CD4-positive, alpha-beta T cell (primary cell): ENCODE measurements at regions of chr11 and their contacts with region 1.

Region 1: DNA sequence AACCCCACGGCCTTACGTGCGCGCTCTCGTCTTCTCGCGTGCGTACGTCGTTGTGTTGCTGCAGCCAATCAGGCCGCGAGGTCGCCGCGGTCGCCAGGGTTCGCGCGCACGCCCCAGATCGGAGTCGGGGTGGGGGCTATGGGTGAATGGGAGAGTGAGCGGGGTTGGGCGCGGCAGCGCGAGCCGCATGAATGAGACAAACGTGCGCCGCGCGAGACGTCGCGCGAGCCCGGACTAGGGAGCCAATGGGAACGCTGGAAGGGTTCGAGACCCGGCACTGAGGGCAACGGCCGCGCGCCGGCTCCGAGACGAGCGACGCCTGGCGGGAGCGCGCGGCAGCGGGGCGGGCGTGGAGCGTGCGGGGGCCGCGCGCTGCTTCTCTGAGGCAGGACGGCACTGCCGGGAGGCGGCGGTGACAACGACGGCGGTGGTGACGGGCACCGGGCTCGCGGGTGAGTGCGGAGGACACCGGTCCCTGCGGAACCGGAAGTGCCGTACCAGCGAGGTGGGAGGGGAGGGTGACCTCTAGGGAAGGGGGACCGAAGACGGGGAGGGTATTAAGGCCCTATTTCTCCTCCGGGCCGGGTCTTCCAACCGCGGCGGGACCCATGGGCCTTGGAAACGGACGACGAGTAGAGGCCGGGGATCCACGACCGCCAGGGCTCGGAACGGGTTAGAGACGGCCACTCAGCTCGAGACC is at the start of gene ZDHHC5:
- DNase-seq: peak; percentile 98 to 100 (median 100)
- ATAC-seq: peak; percentile 83
- H3K4me3 ChIP-seq: peak within 1 kb of the TSS; percentile 87
- H3K4me3 Mint-ChIP-seq: peak within 1 kb of the TSS; percentile 89
- H3K27ac ChIP-seq: peak within 1 kb of the TSS; percentile 98
- H3K27ac Mint-ChIP-seq: peak within 1 kb of the TSS; percentile 95
- H3K4me1 ChIP-seq: peaks cover 32% of the 10 kb centered on the region
- H3K4me1 Mint-ChIP-seq: peaks cover 55% of the 10 kb centered on the region
- H3K27me3 ChIP-seq: no peaks in the 10 kb centered on the region
- H3K27me3 Mint-ChIP-seq: no peaks in the 10 kb centered on the region
- CTCF ChIP-seq: peak; percentile 52
- total RNA-seq, gene ZDHHC5: 59.7 to 61.1 TPM

Region 2: DNA sequence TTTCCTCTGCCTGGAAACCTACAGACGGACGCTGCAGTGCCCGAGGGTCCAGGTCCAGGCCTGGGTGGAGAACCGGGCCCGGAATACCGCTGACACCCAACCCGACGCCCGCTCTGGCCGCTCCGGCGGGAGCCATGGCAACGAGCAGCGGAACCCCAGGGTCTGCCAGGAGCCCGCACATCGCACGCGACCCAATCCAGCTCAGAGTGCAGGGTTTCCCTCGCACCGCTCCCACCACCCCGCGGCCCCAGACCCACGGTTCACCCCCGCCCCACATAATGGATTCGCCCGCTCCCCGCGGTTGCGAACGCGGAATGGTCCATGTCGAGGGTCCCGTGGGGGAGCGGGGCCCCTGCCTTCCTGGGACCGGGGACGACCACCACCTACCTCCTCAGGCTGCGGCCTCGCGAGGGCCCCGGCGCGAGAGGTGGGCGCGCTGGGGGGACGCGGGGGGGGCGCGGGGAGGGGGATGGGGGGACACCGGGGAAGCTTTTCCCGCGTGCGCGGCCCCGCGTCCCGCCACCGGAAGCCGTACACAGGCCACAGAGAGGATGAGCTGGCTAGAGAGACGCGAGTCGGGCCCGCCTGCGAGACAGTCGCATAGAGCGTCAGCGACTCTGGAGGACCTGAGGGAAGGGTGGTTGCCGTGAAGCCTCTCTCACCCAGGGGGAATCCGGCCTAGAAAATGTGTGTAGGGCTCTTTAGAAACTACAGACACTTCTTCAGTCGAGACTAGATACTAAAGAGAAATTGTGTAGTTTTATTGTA is 332.4 kb before region 1 on chr11 and contains the start of gene SSRP1:
- CTCF ChIA-PET with region 1: no interaction called
- POLR2A ChIA-PET with region 1: interaction called, 4 read pairs
- intact Hi-C with region 1: loop called in 1 of 2 experiments (anchors 5 kb)
- DNase-seq: peak; percentile 77 to 95 (median 86)
- ATAC-seq: peak; percentile 97
- H3K4me3 ChIP-seq: peak within 1 kb of the TSS; percentile 80
- H3K4me3 Mint-ChIP-seq: peak within 1 kb of the TSS; percentile 89
- H3K27ac ChIP-seq: peak within 1 kb of the TSS; percentile 72 to 85
- H3K27ac Mint-ChIP-seq: peak within 1 kb of the TSS; percentile 96
- H3K4me1 ChIP-seq: peaks cover 29% of the 10 kb centered on the region
- H3K4me1 Mint-ChIP-seq: peaks cover 33% of the 10 kb centered on the region
- H3K27me3 ChIP-seq: no peaks in the 10 kb centered on the region
- H3K27me3 Mint-ChIP-seq: no peaks in the 10 kb centered on the region
- CTCF ChIP-seq: no peak
- total RNA-seq, gene SSRP1: 36.7 to 41.2 TPM

Region 3: DNA sequence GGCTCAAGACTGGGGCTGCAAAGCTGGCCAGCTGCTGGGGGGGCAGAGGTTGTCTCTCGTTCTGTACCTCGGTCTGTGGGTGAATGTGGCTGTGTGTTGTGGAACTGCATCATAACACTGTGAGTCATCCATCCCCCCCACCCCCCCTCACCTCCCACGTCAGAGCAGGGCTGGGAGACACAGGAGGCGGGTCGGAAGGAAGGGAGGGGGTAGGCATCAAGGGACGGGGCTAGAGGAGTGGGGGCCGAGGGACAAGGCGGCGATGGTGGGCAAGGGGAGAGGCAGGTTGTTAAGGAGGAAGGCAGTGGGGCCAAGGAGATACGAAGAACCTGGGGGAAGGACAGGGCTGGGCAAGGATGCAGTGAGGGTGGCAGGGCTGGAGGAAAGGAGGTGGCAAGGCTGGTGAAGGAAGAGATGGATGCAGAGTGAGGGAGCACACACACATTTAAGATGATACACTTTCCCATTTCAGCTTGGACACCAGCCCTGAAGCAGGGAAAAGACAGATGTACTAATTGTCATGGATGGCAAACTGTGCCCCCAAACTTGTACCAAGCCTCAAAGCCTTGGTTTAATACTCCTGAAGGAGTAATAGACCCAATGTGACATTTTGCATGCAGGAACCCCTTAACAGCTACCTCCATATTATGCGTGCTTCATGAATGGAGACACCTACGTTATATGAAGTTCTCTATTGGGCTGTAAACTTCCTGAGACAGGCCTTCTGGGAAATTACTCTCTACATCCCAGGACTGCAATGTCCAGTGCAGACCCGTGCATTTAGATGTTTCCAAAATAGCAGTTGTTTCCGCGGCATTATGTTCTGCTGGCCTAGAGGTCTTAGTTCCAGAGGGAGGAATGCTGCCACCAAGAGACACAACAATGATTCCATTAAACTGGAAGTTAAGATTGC is 17.8 kb before region 1 on chr11 and contains the start of gene YPEL4:
- CTCF ChIA-PET with region 1: no interaction called
- POLR2A ChIA-PET with region 1: interaction called, 4 read pairs
- intact Hi-C with region 1: loop called in 1 of 2 experiments (anchors 2 kb)
- DNase-seq: peak; percentile 51 to 92 (median 68)
- ATAC-seq: peak; percentile 83
- H3K4me3 ChIP-seq: peak within 1 kb of the TSS; percentile 53
- H3K4me3 Mint-ChIP-seq: peak within 1 kb of the TSS; percentile 87
- H3K27ac ChIP-seq: no peak within 1 kb of the TSS
- H3K27ac Mint-ChIP-seq: peak within 1 kb of the TSS; percentile 83
- H3K4me1 ChIP-seq: peaks cover 44% of the 10 kb centered on the region
- H3K4me1 Mint-ChIP-seq: peaks cover 49% of the 10 kb centered on the region
- H3K27me3 ChIP-seq: peaks cover 42 to 44% of the 10 kb centered on the region in 2 experiments
- H3K27me3 Mint-ChIP-seq: peaks cover 55% of the 10 kb centered on the region
- CTCF ChIP-seq: no peak
- total RNA-seq, gene YPEL4: 5.6 to 7.3 TPM

Region 4: DNA sequence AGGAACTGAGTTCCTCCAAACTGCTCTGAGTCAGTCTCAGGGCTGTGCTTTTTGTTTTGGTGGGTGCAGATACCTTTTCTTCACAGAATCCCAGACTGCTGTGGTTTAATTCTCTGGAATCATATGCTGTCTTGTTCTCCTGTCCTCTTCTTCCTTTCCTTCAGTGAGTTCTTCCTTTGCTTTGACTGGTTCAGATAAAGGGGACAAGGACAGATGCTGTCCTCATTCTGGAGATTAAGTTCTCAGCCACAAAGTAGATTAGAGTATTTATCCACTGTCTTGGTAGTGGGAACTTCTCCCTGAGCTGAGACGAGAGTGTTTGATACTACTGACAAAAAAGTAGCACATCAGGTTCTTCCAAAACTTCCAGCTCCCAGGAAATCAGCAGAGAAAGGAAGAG is 13.3 kb after region 1 on chr11:
- CTCF ChIA-PET with region 1: no interaction called
- POLR2A ChIA-PET with region 1: no interaction called
- intact Hi-C with region 1: no loop called
- DNase-seq: no peak
- ATAC-seq: no peak
- H3K4me3 ChIP-seq: no peak overlapping the region
- H3K4me3 Mint-ChIP-seq: no peak overlapping the region
- H3K27ac ChIP-seq: peak overlapping the region in 1 of 2 donors; percentile 18
- H3K27ac Mint-ChIP-seq: peak overlapping the region; percentile 70
- H3K4me1 ChIP-seq: peaks cover 25% of the 10 kb centered on the region
- H3K4me1 Mint-ChIP-seq: peaks cover 47% of the 10 kb centered on the region
- H3K27me3 ChIP-seq: no peaks in the 10 kb centered on the region
- H3K27me3 Mint-ChIP-seq: no peaks in the 10 kb centered on the region
- CTCF ChIP-seq: no peak

Region 5: DNA sequence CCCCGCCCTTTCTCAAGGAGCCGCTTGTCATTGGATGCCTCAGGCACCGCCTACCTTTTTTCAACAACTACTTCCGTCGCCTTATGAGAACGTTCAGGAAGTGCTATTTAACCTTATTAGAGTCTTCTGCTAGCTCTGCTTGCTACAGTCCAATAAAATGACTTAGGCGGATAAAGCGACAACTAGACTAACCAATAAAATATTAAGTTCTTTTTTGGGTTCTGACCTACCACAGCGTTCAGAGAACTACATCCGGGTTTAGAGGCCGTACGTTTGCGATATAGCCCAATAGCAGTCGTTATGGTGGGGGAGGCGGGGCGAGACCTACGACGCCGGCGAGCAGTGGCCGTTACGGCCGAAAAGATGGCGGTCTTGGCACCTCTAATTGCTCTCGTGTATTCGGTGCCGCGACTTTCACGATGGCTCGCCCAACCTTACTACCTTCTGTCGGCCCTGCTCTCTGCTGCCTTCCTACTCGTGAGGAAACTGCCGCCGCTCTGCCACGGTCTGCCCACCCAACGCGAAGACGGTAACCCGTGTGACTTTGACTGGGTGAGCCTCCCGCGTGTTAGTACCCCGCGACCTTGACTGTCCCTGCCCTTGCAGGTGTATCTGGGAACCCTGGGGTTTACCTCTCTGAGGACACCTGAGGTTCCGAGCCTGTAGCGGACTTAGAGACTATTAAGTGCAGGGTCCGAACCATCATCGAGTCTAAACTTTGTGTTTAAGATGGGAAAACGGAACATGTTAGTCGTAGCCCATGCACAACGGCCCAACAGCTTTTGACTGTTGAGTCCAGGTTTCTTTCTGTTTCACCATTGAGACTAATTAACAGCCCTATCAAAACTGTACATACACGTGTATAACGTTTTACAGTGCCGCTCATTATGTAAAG is 44.6 kb after region 1 on chr11 and contains the start of gene TMX2:
- CTCF ChIA-PET with region 1: no interaction called
- POLR2A ChIA-PET with region 1: interaction called, 15 read pairs
- intact Hi-C with region 1: loop called (anchors 1 to 2 kb)
- DNase-seq: peak; percentile 79 to 97 (median 84)
- ATAC-seq: peak; percentile 89
- H3K4me3 ChIP-seq: peak within 1 kb of the TSS; percentile 95
- H3K4me3 Mint-ChIP-seq: peak within 1 kb of the TSS; percentile 96
- H3K27ac ChIP-seq: peak within 1 kb of the TSS; percentile 85 to 95
- H3K27ac Mint-ChIP-seq: peak within 1 kb of the TSS; percentile 88
- H3K4me1 ChIP-seq: peaks cover 30% of the 10 kb centered on the region
- H3K4me1 Mint-ChIP-seq: peaks cover 53% of the 10 kb centered on the region
- H3K27me3 ChIP-seq: no peaks in the 10 kb centered on the region
- H3K27me3 Mint-ChIP-seq: no peaks in the 10 kb centered on the region
- CTCF ChIP-seq: no peak
- total RNA-seq, gene TMX2: 30.0 to 30.5 TPM

Region 6: GRCh38 chr11:57792060-57792541 is 124.2 kb after region 1 on chr11:
- CTCF ChIA-PET with region 1: no interaction called
- POLR2A ChIA-PET with region 1: no interaction called
- intact Hi-C with region 1: loop called (anchors 1 to 5 kb)
- DNase-seq: peak; percentile 76 to 97 (median 84)
- ATAC-seq: peak; percentile 94
- H3K4me3 ChIP-seq: peak overlapping the region; percentile 21
- H3K4me3 Mint-ChIP-seq: peak overlapping the region; percentile 80
- H3K27ac ChIP-seq: peak overlapping the region; percentile 79 to 83
- H3K27ac Mint-ChIP-seq: peak overlapping the region; percentile 95
- H3K4me1 ChIP-seq: peaks cover 31% of the 10 kb centered on the region
- H3K4me1 Mint-ChIP-seq: peaks cover 34% of the 10 kb centered on the region
- H3K27me3 ChIP-seq: no peaks in the 10 kb centered on the region
- H3K27me3 Mint-ChIP-seq: no peaks in the 10 kb centered on the region
- CTCF ChIP-seq: no peak

Region 7: DNA sequence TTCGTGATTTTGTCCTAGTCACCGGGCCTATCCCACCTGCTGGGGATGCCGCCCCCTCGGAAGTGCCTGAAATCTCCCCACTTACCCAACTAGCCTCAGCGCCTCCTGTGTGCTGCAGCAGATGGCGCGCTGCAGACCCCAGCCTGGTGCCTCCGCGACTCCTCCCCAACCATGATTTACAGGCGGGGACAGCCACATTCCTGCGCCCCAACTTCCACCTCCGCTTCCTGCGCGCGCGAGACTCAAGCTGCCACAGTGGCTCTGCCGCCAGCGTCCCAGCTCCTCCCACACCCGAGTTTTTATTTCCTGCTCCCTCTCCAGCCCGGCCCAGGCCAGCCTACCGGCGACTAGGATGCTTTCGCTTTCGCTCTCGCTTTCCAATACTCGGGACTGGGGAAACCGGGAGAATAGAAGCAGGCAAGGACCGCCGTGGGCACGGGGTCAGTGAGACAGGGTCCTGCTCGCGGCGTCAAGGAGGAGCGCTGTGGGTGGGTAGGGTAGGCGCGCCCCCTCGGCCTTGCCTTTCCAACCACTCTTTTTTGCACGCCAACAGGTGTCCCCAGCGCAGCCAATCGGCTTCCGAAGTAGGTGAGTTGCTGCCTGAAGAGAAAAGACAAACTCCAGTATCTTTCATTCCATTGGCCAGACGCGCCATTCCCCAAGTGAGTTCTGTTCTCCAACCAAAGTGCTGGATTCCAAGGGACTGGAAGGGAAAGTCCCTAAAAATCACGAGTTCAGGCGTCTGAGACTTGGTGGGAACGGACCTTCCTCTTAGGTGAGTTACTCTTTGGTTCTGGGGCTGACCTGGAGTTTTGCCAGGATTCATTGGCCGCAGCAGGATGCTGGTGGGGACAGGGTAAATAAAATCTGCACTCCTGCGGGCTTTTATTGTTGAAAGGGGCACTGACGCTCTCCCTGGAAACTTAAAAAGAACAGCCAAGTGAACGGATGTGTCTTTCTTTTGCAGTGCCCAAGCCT is 1474.9 kb after region 1 on chr11 and contains the start of gene FAM111A:
- CTCF ChIA-PET with region 1: no interaction called
- POLR2A ChIA-PET with region 1: no interaction called
- intact Hi-C with region 1: loop called in 1 of 2 experiments (anchors 5 kb)
- DNase-seq: peak; percentile 67 to 95 (median 82)
- ATAC-seq: peak; percentile 81
- H3K4me3 ChIP-seq: peak within 1 kb of the TSS; percentile 79
- H3K4me3 Mint-ChIP-seq: peak within 1 kb of the TSS; percentile 94
- H3K27ac ChIP-seq: peak within 1 kb of the TSS; percentile 80 to 91
- H3K27ac Mint-ChIP-seq: peak within 1 kb of the TSS; percentile 90
- H3K4me1 ChIP-seq: peaks cover 23% of the 10 kb centered on the region
- H3K4me1 Mint-ChIP-seq: peaks cover 50% of the 10 kb centered on the region
- H3K27me3 ChIP-seq: no peaks in the 10 kb centered on the region
- H3K27me3 Mint-ChIP-seq: no peaks in the 10 kb centered on the region
- CTCF ChIP-seq: no peak
- total RNA-seq, gene FAM111A: 32.8 to 34.4 TPM